ENCODE measurements at regions of chr13 and their contacts with region 1.

Region 1: GRCh38 chr13:102197193-102197592 is 204.7 kb downstream of the FGF14 start:
- DNase-seq: no peak
- H3K4me3 ChIP-seq: no peak overlapping the region
- H3K27ac ChIP-seq: no peak overlapping the region
- H3K4me1 ChIP-seq: peaks cover 0 to 5% (median 0%) of the 10 kb centered on the region in 4 donors
- H3K27me3 ChIP-seq: no peaks in the 10 kb centered on the region
- CTCF ChIP-seq: peak in 2 of 3 experiments; percentile 41 to 43
- EP300 ChIP-seq: no peak
- POLR2A ChIP-seq: no peak

Region 2: DNA sequence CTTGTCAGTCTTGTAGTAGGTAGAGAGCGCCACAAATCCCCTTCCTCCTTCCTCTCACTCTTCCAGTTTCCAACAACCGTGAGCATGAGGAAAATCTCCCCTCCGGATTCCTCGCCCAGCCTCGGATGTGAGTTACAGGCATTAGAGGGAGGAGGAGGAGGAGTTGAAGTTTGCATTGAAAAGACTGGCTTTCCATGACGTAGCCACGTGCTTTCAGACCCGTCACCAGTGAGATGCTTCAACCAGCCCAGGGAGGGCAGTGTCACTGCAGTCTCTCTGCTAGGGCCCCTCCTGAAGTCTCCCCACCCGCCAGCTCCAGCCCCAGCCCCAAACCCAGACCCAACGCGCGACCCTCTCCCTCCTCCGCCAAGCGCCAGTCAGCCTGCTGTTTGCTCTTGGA is 205.1 kb after region 1 on chr13:
- intact Hi-C with region 1: loop called (anchors 2 kb)
- DNase-seq: no peak
- H3K4me3 ChIP-seq: peak overlapping the region; percentile 59 to 77 (median 66)
- H3K27ac ChIP-seq: peak overlapping the region; percentile 0 to 81 (median 74)
- H3K4me1 ChIP-seq: peaks cover 5 to 40% (median 27%) of the 10 kb centered on the region in 4 donors
- H3K27me3 ChIP-seq: peaks cover 0 to 32% (median 9%) of the 10 kb centered on the region in 4 donors
- CTCF ChIP-seq: no peak
- EP300 ChIP-seq: no peak
- POLR2A ChIP-seq: no peak

Region 3: DNA sequence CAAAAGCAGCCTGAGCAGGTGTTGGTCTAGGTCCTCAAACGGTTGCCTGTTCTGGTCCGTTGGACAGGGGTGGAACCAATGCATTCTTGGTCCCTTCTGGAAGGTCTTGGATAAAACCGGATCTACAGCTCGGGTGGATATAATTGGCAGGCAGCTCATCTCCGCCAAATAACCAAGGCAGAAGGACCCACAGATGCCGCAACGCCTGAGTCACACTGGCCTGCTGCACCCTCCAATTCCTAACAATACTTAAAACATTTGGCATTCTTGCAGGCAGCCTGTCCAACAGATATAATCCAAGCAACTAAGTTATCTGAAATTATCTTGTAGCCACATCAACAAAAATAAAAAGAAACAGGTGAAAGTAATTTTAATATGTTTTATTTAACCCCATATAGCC is 263.6 kb after region 1 on chr13:
- intact Hi-C with region 1: loop called (anchors 5 kb)
- DNase-seq: no peak
- H3K4me3 ChIP-seq: no peak overlapping the region
- H3K27ac ChIP-seq: no peak overlapping the region
- H3K4me1 ChIP-seq: no peaks in the 10 kb centered on the region
- H3K27me3 ChIP-seq: no peaks in the 10 kb centered on the region
- CTCF ChIP-seq: no peak
- EP300 ChIP-seq: no peak
- POLR2A ChIP-seq: no peak

Region 4: DNA sequence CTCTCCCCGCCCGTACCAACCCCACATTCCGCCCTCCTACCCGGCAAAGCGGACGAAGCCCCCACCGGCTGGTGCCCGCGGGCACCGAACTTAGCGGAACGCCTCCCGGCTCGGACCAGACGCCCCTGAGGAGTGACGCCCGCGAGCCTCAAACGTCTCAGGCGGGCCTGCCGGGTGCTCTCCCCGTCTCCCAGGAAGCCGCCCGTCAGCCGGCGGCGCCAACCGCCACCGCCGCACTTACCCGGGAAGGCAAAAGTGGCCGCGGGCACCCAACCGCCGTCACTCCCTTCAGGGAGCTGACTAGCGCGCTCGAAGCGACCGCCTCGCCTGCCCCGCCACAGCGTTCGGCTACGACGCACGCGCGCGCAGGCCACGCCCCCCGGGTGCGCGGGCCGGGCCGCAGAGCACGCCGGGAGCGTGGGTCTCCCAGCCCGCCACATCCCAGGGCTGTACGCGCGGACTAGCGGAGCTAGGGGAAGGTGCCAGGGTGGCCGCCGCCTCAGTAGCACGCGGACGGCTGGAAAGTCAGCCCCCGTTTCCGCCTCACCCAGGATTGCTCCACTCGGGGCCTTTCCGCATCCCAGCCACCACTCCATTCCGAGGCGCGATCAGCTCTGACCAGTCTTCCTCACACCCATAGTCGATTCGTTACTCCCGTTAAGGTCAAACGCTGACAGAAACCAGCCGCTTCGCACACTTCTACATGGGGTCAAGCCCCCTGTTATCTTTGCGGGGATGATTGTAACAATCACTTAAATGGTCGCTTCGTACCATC is 576.4 kb after region 1 on chr13 and contains the start of gene TEX30:
- intact Hi-C with region 1: no loop called
- DNase-seq: peak; percentile 92
- H3K4me3 ChIP-seq: peak within 1 kb of the TSS; percentile 75 to 91 (median 86)
- H3K27ac ChIP-seq: peak within 1 kb of the TSS; percentile 82 to 91 (median 85)
- H3K4me1 ChIP-seq: peaks cover 11 to 21% (median 14%) of the 10 kb centered on the region in 4 donors
- H3K27me3 ChIP-seq: no peaks in the 10 kb centered on the region
- CTCF ChIP-seq: peak in 2 of 3 experiments; percentile 25 to 27
- EP300 ChIP-seq: no peak
- POLR2A ChIP-seq: peak; percentile 57
- total RNA-seq, gene TEX30: 5.1 to 12.5 (median 8.0) TPM